ENCODE measurements at regions of chr11 and their contacts with region 1.

Region 1: DNA sequence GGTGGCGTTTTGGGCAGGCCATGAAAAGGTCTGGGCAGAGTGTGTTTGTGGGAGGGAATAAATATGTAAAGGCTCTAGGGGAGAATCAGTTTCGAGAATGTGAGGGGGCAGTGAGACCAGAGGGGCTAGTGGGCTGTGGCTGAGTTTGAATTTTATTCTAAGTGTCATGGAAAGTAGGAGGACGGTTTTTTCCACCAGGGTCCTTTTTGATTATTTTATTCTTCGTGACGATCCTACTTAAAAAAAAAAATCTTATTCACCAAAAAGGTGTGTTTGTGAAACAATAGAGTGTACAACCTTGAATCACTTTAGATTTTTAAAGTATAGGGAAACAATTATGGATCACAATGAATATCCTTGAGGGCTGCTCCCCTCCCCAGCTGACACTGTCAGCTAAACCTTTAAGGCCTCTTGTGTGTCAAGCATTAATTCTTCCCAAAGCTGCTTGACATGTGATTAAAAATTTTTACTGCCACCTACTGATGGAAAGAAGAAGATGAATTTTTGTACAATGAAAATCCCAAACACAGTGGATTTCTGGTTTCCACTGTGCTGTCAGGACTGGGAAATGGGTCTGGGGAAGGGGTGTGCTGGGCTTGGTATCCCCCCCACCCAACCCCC is 107.5 kb upstream of the OR4B1 start:
- DNase-seq: peak; percentile 65 to 71
- ATAC-seq: peak; percentile 59 to 64
- H3K4me3 ChIP-seq: peak overlapping the region; percentile 34
- H3K27ac ChIP-seq: peak overlapping the region; percentile 82 to 89
- H3K4me1 ChIP-seq: peaks cover 74% of the 10 kb centered on the region
- CTCF ChIP-seq: peak; percentile 54
- EP300 ChIP-seq: no peak
- POLR2A ChIP-seq: no peak
- RAD21 ChIP-seq: peak; percentile 54 to 62; a peak in 4 of 5 replicates

Region 2: DNA sequence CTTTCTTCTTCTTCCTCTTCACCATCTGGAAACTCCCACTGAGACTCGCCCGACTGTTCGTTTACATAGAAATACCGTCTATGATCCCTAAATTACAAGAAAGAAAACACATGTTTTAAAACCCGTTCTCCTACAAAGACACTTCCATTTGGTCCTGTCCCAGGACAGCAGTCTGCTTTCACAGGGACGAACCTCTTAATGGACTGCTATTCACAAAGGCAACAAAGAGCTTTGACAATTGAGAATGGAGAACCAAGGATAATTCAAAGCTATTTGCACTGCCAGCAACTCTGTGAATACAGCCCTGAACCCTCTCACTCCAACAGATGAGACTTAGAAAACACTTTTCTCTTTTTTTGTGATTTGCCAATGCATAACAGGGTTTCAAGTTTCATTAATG is 377.7 kb before region 1 on chr11:
- CTCF ChIA-PET with region 1: no interaction called
- POLR2A ChIA-PET with region 1: no interaction called
- DNase-seq: no peak
- ATAC-seq: no peak
- H3K4me3 ChIP-seq: no peak overlapping the region
- H3K27ac ChIP-seq: no peak overlapping the region
- H3K4me1 ChIP-seq: no peaks in the 10 kb centered on the region
- CTCF ChIP-seq: no peak
- EP300 ChIP-seq: no peak
- POLR2A ChIP-seq: no peak
- RAD21 ChIP-seq: no peak

Region 3: DNA sequence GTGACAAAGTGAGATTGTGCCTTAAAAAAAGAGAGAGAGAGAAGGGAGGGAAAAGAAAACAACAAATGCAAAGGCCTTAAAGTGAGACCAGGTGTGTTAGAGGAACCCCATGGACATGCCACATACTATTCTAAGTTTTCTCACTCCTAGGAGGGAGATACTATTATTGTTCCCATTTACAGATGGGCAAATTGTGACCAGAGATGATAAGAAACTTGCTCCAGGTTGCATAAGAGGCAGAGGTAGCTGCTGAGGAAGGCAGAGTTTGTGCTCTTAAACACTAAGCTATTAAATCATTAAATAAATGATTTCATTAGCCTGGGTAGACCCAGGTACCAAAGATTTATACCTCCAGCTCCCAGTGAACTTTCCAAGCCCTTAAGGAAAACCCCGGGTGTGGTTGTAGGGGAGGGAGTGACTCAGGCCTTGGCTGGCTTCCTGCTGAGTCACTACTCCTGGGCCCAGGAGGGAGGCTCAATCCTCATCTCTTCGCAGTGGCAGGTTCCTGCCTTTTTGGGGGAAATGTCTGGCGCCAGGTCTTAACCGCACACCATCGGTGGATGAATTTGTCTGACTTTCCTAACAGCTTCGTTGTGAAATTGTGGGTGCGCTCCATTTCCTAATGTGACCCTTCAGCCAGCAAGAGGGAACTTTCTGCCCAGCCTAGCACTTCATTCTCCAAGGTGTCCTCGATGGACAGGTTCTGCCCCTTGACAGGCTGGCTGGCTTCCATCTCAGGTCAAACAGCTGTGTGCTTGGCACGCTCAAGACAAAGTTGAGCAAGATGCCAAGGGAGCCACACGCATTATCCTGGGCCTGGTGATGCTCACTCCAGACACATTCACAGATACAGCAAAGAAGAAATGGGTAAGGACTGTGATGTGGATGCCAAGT is 162.2 kb before region 1 on chr11:
- CTCF ChIA-PET with region 1: interaction called, 478 read pairs
- POLR2A ChIA-PET with region 1: interaction called, 3 read pairs
- DNase-seq: peak; percentile 95 to 98
- ATAC-seq: peak; percentile 88 to 94
- H3K4me3 ChIP-seq: no peak overlapping the region
- H3K27ac ChIP-seq: peak overlapping the region; percentile 87
- H3K4me1 ChIP-seq: peaks cover 66% of the 10 kb centered on the region
- CTCF ChIP-seq: no peak
- EP300 ChIP-seq: peak; percentile 76 to 92; a peak in 3 of 5 replicates
- POLR2A ChIP-seq: no peak
- RAD21 ChIP-seq: peak; percentile 15 to 37; a peak in 4 of 5 replicates

Region 4: DNA sequence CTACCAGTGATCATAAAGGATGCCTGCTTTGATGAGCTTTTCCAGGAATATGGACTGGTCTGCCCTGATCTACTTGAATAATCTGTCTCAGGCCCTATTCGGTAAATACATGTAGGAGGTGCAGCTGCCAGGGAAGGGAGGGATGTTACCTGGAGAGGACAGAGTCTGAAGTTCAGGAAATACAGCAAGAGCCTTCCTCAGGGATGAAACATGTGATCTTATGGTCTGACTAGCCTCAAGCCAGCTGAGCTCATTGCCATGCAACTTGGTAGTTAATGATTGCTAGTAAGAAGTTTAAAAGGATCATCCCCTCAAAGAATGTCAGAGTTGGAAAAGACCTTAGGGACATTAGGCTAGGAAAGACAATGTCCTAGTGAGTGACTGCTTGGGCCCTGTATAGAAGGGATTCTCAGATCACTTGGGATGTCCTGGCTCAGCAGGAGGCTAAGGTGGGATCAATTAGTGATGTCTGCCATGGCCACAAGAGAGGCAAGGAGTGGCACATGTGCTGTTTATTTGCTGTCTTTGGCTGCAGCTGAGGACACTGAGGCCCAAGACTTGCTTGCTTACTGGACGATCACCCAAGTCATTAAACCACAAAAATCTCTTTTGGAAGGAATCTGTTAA is 110.3 kb before region 1 on chr11:
- CTCF ChIA-PET with region 1: interaction called, 13 read pairs
- POLR2A ChIA-PET with region 1: no interaction called
- DNase-seq: peak; percentile 54 to 75
- ATAC-seq: peak; percentile 54 to 77
- H3K4me3 ChIP-seq: peak overlapping the region; percentile 1; the same call in 1 of the 3 replicates
- H3K27ac ChIP-seq: peak overlapping the region; percentile 86 to 100
- H3K4me1 ChIP-seq: peaks cover 97% of the 10 kb centered on the region
- CTCF ChIP-seq: no peak
- EP300 ChIP-seq: no peak; a peak in 1 of 5 replicates
- POLR2A ChIP-seq: no peak
- RAD21 ChIP-seq: 0 out of 5 replicates have a peak, but pooled peaks of 1 of the 2 experiments have one; percentile 5

Region 5: DNA sequence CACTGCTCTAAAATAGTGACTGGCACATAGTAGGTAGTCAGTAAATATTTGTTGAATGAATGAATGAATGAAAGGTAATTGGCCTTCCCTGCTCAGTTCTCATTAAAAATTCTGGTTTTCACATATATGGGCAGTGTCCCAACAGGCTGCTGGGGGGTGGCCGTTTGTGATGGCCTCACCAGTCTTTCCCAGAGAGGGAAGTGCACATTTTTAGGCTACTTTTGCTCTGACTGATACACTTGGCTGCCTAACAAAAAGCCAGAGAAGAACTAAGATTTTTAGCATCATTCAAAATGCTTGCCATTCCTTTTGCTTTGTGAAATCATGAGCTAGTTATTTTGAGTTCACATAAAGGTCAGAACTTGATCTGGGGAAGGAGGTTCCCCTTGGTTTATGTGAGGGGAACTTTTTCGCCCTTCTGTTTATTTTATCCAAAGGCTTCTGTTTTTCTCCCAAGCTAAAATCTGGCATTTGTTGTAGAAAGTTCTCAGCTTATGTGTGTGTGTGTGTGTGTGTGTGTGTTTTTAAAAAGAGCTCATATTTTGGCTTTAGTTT is 45.7 kb before region 1 on chr11:
- CTCF ChIA-PET with region 1: interaction called, 15 read pairs
- POLR2A ChIA-PET with region 1: no interaction called
- DNase-seq: peak; percentile 57 to 78
- ATAC-seq: peak; percentile 61 to 72
- H3K4me3 ChIP-seq: no peak overlapping the region
- H3K27ac ChIP-seq: peak overlapping the region; percentile 74 to 90
- H3K4me1 ChIP-seq: peaks cover 84% of the 10 kb centered on the region
- CTCF ChIP-seq: no peak
- EP300 ChIP-seq: peak in 1 of 2 experiments; percentile 57; a peak in 2 of 5 replicates
- POLR2A ChIP-seq: no peak
- RAD21 ChIP-seq: peak in 1 of 2 experiments; percentile 15; a peak in 1 of 5 replicates

Region 6: DNA sequence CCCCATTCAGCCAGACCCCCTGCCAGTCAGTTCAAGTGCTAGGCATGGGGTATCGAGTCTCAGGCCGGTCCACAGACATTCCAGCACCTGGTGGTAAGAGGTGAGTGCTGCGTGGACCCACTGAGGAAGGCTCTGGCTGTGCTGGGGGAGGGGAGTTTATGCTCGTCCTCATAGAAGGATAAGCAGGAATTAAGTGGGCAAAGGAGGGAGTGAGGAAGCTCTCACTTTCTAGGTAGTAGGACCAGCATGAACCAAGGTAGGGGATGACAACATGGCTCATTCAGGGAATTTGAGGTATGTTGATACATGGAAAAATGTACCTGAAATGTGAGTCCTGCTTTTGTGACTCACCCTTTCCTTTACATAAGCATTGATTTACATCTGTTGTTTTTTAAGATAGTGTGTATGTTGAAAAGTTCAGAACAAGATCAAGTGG is 12.1 kb before region 1 on chr11:
- CTCF ChIA-PET with region 1: interaction called, 25 read pairs
- POLR2A ChIA-PET with region 1: no interaction called
- DNase-seq: no peak
- ATAC-seq: peak in 1 of 2 experiments; percentile 11; a peak in 2 of 6 replicates
- H3K4me3 ChIP-seq: no peak overlapping the region
- H3K27ac ChIP-seq: peak overlapping the region; percentile 13 to 50; a peak in 2 of 6 replicates
- H3K4me1 ChIP-seq: peaks cover 85% of the 10 kb centered on the region
- CTCF ChIP-seq: no peak
- EP300 ChIP-seq: no peak
- POLR2A ChIP-seq: no peak
- RAD21 ChIP-seq: no peak